Activated CD4-positive, alpha-beta memory T cell treated with anti-CD3 and anti-CD28 coated beads, Interleukin-2, amount 10 ng/mL, durations not matched to agents 7 days and 5 days (primary cell): ENCODE measurements at regions of chr12 and their contacts with region 1.

Region 1: DNA sequence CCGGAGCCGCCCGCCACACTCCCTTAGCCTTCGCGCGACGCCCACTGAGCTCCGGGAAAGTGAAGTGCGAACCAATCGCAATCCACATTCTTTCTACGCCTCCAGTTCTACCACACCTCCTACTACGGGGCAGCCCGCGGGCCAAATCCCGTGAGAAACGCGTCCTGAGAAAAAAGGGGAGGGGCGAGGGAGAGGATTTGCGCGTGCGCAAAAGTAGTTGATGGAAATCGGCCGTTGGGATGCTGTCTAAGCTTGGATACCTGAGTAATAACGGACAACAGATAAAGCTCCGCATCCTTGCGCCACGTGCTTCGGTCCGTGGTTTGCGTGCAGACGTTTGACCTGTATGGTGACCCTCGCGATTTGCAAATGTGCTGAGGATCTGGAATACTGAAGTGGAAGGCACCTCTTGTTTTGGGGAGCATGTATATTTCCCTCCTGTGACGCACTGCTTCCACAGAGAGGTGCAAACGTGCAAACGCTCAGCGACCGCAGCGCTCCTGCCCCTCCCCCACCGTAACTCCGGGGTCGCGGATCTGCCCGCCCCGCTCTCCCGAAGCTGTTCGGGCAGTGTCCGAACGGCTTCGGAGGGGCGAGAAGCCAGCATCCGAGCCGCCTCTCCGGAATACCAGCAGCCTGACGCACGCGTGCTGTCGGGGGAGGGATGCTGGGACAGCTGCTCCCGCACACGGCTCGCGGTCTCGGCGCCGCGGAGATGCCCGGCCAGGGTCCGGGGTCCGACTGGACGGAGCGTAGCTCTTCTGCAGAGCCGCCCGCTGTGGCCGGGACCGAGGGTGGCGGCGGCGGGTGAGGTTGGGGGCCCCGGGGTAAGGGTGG is at the starts of genes FAM216A and GPN3:
- DNase-seq: peak; percentile 98
- H3K4me3 Mint-ChIP-seq: peak within 1 kb of the TSS; percentile 92
- H3K27ac Mint-ChIP-seq: peak within 1 kb of the TSS; percentile 95
- H3K4me1 Mint-ChIP-seq: peaks cover 37% of the 10 kb centered on the region
- H3K27me3 Mint-ChIP-seq: no peaks in the 10 kb centered on the region
- total RNA-seq, gene FAM216A: 14.7 to 16.7 TPM
- total RNA-seq, gene GPN3: 18.9 to 21.6 TPM

Region 2: DNA sequence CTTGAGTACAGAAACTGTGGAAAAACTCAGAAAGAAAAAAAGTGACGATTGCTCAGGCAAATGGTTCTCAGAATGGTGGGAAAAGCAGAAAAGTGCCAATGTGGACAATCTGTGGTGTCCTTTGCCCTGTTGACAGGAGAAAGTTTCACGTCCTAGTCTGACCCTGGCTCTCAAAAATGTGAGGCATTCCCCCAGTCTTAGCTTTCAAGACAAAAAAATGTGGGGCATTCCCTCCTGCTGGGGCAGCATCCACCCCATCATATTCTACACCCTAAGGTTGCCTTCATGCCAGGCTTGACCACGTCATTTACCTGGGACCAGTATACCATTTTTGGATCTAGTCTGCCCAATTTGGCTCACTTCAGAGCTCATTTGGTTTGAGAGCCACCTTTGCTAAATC is 44.2 kb before region 1 on chr12:
- CTCF ChIA-PET with region 1: no interaction called
- POLR2A ChIA-PET with region 1: no interaction called
- DNase-seq: no peak
- H3K4me3 Mint-ChIP-seq: no peak overlapping the region
- H3K27ac Mint-ChIP-seq: no peak overlapping the region
- H3K4me1 Mint-ChIP-seq: no peaks in the 10 kb centered on the region
- H3K27me3 Mint-ChIP-seq: peaks cover 27% of the 10 kb centered on the region

Region 3: DNA sequence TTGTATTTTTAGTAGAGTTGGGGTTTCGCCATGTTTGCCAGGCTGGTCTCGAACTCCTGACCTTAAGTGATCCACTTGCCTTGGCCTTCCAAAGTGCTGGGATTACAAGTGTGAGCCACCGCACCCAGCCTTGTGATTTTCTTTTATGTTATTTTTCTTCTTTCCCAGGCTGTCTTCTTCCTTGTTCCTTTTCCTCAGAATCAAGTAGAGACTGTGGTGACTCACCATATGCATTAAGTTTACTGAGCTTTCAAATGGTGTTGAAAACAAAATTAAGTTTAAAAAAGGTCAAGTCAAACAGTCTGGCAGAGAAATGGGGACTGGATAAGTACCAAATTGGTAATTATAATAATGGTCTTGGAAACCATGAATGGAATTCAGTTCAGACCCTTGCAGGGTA is 24.0 kb before region 1 on chr12:
- CTCF ChIA-PET with region 1: interaction called, 67 read pairs
- POLR2A ChIA-PET with region 1: interaction called, 139 read pairs
- DNase-seq: no peak
- H3K4me3 Mint-ChIP-seq: no peak overlapping the region
- H3K27ac Mint-ChIP-seq: no peak overlapping the region
- H3K4me1 Mint-ChIP-seq: peaks cover 35% of the 10 kb centered on the region
- H3K27me3 Mint-ChIP-seq: no peaks in the 10 kb centered on the region

Region 4: GRCh38 chr12:110577717-110578521 is 109.5 kb after region 1 on chr12:
- CTCF ChIA-PET with region 1: interaction called, 7 read pairs
- POLR2A ChIA-PET with region 1: interaction called, 23 read pairs
- DNase-seq: peak; percentile 54
- H3K4me3 Mint-ChIP-seq: peak overlapping the region; percentile 67
- H3K27ac Mint-ChIP-seq: peak overlapping the region; percentile 98
- H3K4me1 Mint-ChIP-seq: peaks cover 66% of the 10 kb centered on the region
- H3K27me3 Mint-ChIP-seq: no peaks in the 10 kb centered on the region

Region 5: GRCh38 chr12:110583137-110584059 is 115.0 kb after region 1 on chr12 and contains the start of gene PPTC7:
- CTCF ChIA-PET with region 1: interaction called, 13 read pairs
- POLR2A ChIA-PET with region 1: interaction called, 23 read pairs
- DNase-seq: peak; percentile 97
- H3K4me3 Mint-ChIP-seq: peak within 1 kb of the TSS; percentile 88
- H3K27ac Mint-ChIP-seq: peak within 1 kb of the TSS; percentile 88
- H3K4me1 Mint-ChIP-seq: peaks cover 64% of the 10 kb centered on the region
- H3K27me3 Mint-ChIP-seq: no peaks in the 10 kb centered on the region
- total RNA-seq, gene PPTC7: 31.5 to 31.8 TPM

Region 6: GRCh38 chr12:110613771-110614684 is 145.6 kb after region 1 on chr12 and contains the start of gene TCTN1:
- CTCF ChIA-PET with region 1: interaction called, 16 read pairs
- POLR2A ChIA-PET with region 1: interaction called, 11 read pairs
- DNase-seq: peak; percentile 98
- H3K4me3 Mint-ChIP-seq: peak within 1 kb of the TSS; percentile 81
- H3K27ac Mint-ChIP-seq: peak within 1 kb of the TSS; percentile 79
- H3K4me1 Mint-ChIP-seq: peaks cover 14% of the 10 kb centered on the region
- H3K27me3 Mint-ChIP-seq: no peaks in the 10 kb centered on the region
- total RNA-seq, gene TCTN1: 2.6 to 3.4 TPM